ENCODE measurements at regions of chr7 and their contacts with region 1.

Region 1: DNA sequence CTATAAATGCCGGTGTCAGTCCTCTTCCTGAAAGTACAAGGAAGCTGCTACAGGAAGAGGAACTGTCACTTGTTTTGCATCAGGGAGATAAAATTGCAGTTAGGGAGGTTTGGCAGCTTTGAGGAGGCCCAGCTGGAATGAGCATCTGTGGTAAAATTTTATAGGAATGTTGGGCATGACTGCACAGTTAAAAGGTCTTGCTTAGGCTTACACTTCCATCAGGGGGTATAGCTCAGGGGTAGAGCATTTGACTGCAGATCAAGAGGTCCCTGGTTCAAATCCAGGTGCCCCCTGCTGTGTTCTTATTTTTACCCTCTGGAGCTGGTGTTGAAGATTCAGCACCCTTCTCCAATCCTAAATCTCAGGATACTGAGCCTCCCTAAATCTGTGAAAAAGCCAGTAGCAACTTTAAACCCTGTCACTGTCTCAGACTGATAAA is 65.9 kb downstream of the ZNF467 start:
- DNase-seq: no peak
- H3K4me3 ChIP-seq: no peak overlapping the region
- H3K27ac ChIP-seq: no peak overlapping the region
- H3K4me1 ChIP-seq: peaks cover 0 to 4% (median 1%) of the 10 kb centered on the region in 4 experiments
- H3K27me3 ChIP-seq: no peaks in the 10 kb centered on the region

Region 2: GRCh38 chr7:149722356-149722957 is 15.0 kb after region 1 on chr7:
- CTCF ChIA-PET with region 1: interaction called, 12 read pairs
- POLR2A ChIA-PET with region 1: no interaction called
- DNase-seq: peak in 1 of 3 donors; percentile 21
- H3K4me3 ChIP-seq: no peak overlapping the region
- H3K27ac ChIP-seq: no peak overlapping the region
- H3K4me1 ChIP-seq: peaks cover 0 to 27% (median 11%) of the 10 kb centered on the region in 4 experiments
- H3K27me3 ChIP-seq: no peaks in the 10 kb centered on the region

Measured in common myeloid progenitor, CD34-positive (primary cell).